ENCODE measurements at regions of chr6 and their contacts with region 1.

Region 1: DNA sequence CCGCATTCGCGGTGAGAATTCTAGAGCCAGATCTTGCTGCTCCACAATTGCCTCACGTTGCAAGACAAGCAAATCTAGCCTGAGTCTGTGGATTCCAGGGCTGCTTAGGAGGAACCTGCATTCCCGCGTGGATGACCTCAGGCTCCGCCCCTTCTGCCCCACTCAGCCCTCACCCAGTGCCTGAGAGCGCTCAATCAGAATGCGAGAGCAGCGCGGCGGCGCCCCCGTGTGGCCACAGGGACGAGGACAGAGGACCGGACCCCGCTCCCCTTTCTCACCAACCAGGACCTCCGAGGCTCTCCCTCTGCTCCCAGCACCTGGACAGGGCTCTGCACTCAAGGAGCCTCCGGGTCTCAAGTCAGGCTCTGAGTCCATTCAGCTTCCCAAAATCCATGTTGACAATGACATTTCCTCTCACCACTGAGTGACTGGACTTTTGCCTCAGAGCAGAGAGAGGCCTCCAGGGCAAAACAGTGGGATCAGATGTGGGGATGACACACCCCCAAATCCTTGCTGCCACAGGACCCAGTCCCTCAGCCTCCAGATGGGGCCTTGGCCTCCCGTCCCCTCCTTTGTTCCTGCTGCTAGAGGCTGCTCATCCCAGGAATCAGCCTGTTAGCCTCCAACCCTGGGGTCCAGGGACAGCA is 52.0 kb downstream of the RPP21 start:
- DNase-seq: peak; percentile 90 to 96 (median 94)
- ATAC-seq: peak; percentile 100
- H3K4me3 ChIP-seq: no peak overlapping the region
- H3K27ac ChIP-seq: no peak overlapping the region
- H3K4me1 ChIP-seq: peaks cover 0 to 3% of the 10 kb centered on the region in 2 experiments; a peak in 2 of 5 replicates
- H3K27me3 ChIP-seq: peaks cover 26 to 38% of the 10 kb centered on the region in 2 experiments
- CTCF ChIP-seq: peak; percentile 96 to 98 (median 96)
- EP300 ChIP-seq: no peak
- POLR2A ChIP-seq: no peak
- RAD21 ChIP-seq: peak; percentile 90 to 99

Region 2: GRCh38 chr6:30102970-30103874 is 293.7 kb before region 1 on chr6:
- CTCF ChIA-PET with region 1: interaction called, 6 read pairs
- POLR2A ChIA-PET with region 1: no interaction called
- in situ Hi-C with region 1: no loop called
- intact Hi-C with region 1: loop called (anchors 5 kb)
- DNase-seq: peak; percentile 88 to 93 (median 88)
- ATAC-seq: peak; percentile 87
- H3K4me3 ChIP-seq: no peak overlapping the region
- H3K27ac ChIP-seq: no peak overlapping the region
- H3K4me1 ChIP-seq: peaks cover 25 to 34% of the 10 kb centered on the region in 2 experiments
- H3K27me3 ChIP-seq: peaks cover 17 to 29% of the 10 kb centered on the region in 2 experiments; a peak in 4 of 5 replicates
- CTCF ChIP-seq: peak; percentile 96 to 98 (median 98)
- EP300 ChIP-seq: no peak
- POLR2A ChIP-seq: peak; percentile 35; the same call in 1 of the 2 replicates
- RAD21 ChIP-seq: peak; percentile 89 to 92

Region 3: GRCh38 chr6:30116724-30117123 is 280.2 kb before region 1 on chr6:
- CTCF ChIA-PET with region 1: no interaction called
- POLR2A ChIA-PET with region 1: no interaction called
- in situ Hi-C with region 1: no loop called
- intact Hi-C with region 1: loop called (anchors 5 kb)
- DNase-seq: no peak
- ATAC-seq: no peak
- H3K4me3 ChIP-seq: no peak overlapping the region
- H3K27ac ChIP-seq: no peak overlapping the region
- H3K4me1 ChIP-seq: peaks cover 4% of the 10 kb centered on the region in 2 experiments; a peak in 1 of 5 replicates
- H3K27me3 ChIP-seq: peaks cover 10 to 17% of the 10 kb centered on the region in 2 experiments
- CTCF ChIP-seq: 0 out of 6 replicates have a peak, but pooled peaks of 1 of the 3 experiments have one; percentile 4
- EP300 ChIP-seq: no peak
- POLR2A ChIP-seq: no peak
- RAD21 ChIP-seq: no peak

Region 4: DNA sequence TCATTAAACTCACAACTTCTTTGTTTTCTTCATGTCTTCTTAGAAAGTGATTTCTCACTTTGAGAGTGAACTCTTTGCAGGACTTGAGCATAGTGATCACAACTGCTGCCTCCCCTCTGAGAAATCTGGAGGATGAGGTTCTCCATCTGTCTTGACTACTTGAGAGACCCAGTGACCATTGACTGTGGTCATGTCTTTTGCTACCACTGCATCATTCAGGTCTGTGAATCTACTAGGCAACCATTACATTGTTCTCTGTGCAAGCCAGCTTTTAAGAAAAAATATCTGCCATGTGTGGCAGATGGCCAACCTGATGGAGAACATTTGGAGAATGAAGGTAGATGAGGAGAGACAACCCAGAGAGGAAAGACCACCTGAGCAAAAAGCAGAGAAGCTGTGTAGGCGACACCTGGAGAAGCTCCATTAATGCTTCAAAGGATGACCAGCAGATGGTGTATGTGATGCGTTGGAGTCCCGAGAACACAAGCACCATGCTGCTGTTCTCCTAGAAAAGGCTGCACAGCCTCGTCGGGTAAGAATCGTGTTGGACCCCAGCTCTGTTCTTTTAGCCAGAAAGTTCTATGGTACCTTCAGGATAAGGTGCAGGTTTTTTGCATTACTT is 158.7 kb before region 1 on chr6:
- CTCF ChIA-PET with region 1: interaction called, 16 read pairs
- POLR2A ChIA-PET with region 1: interaction called, 5 read pairs
- in situ Hi-C with region 1: loop called (anchors 5 kb)
- intact Hi-C with region 1: loop called (anchors 1 kb)
- DNase-seq: peak in 2 of 4 experiments; percentile 49 to 65
- ATAC-seq: peak; percentile 93
- H3K4me3 ChIP-seq: no peak overlapping the region
- H3K27ac ChIP-seq: no peak overlapping the region
- H3K4me1 ChIP-seq: no peaks in the 10 kb centered on the region
- H3K27me3 ChIP-seq: peaks cover 16 to 34% of the 10 kb centered on the region in 2 experiments; a peak in 4 of 5 replicates
- CTCF ChIP-seq: peak; percentile 73 to 82 (median 76)
- EP300 ChIP-seq: no peak
- POLR2A ChIP-seq: no peak
- RAD21 ChIP-seq: peak; percentile 67 to 93

Region 5: DNA sequence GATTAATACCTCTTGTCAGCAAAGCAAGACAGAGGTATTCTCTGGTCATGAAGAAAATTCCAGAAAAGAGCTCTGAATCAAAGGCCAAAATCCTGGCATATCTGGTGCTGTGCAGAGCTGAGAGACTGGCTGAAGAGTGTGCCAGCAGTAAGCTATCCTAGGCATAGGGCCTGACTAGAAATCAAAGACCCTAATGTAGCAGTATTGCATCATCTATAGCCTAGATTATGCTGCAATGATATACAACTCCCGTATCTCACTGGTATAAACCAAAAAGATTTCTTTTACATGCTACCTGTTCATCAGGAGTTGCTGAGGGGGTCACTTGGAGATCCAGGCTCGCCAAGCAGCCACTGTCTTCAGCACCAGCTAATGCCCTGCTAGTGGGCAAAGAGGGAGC is 101.1 kb before region 1 on chr6:
- CTCF ChIA-PET with region 1: no interaction called
- POLR2A ChIA-PET with region 1: no interaction called
- in situ Hi-C with region 1: no loop called
- intact Hi-C with region 1: no loop called
- DNase-seq: no peak
- ATAC-seq: no peak
- H3K4me3 ChIP-seq: no peak overlapping the region
- H3K27ac ChIP-seq: no peak overlapping the region
- H3K4me1 ChIP-seq: no peaks in the 10 kb centered on the region
- H3K27me3 ChIP-seq: no peaks in the 10 kb centered on the region
- CTCF ChIP-seq: no peak
- EP300 ChIP-seq: no peak
- POLR2A ChIP-seq: no peak
- RAD21 ChIP-seq: no peak

Region 6: GRCh38 chr6:30357678-30358540 is 39.0 kb before region 1 on chr6:
- CTCF ChIA-PET with region 1: no interaction called
- POLR2A ChIA-PET with region 1: no interaction called
- in situ Hi-C with region 1: no loop called
- intact Hi-C with region 1: loop called (anchors 2 kb)
- DNase-seq: peak; percentile 51 to 75 (median 64)
- ATAC-seq: peak; percentile 94
- H3K4me3 ChIP-seq: no peak overlapping the region
- H3K27ac ChIP-seq: no peak overlapping the region
- H3K4me1 ChIP-seq: peaks cover 0 to 5% of the 10 kb centered on the region in 2 experiments; a peak in 3 of 5 replicates
- H3K27me3 ChIP-seq: peaks cover 27% of the 10 kb centered on the region in 2 experiments
- CTCF ChIP-seq: peak; percentile 75 to 88 (median 79)
- EP300 ChIP-seq: no peak
- POLR2A ChIP-seq: no peak
- RAD21 ChIP-seq: peak; percentile 29 to 62; a peak in 3 of 4 replicates

Measured in K562 (cell line).